Caco-2 (cell line): ENCODE measurements at regions of chr13 and their contacts with region 1.

Region 1: GRCh38 chr13:49936085-49936940 is at the start of gene SPRYD7:
- DNase-seq: peak; percentile 99 to 100
- H3K4me3 ChIP-seq: peak within 1 kb of the TSS; percentile 97
- H3K4me3 Mint-ChIP-seq: peak within 1 kb of the TSS; percentile 100
- H3K27ac Mint-ChIP-seq: peak within 1 kb of the TSS; percentile 98
- H3K4me1 ChIP-seq: peaks cover 43% of the 10 kb centered on the region
- H3K4me1 Mint-ChIP-seq: peaks cover 32% of the 10 kb centered on the region
- H3K27me3 ChIP-seq: no peaks in the 10 kb centered on the region
- H3K27me3 Mint-ChIP-seq: no peaks in the 10 kb centered on the region
- CTCF ChIP-seq: peak; percentile 97 to 99
- total RNA-seq, gene SPRYD7: 16.7 and 20.7 TPM in 2 replicates

Region 2: GRCh38 chr13:49086711-49087110 is 849.6 kb before region 1 on chr13:
- CTCF ChIA-PET with region 1: no interaction called
- POLR2A ChIA-PET with region 1: no interaction called
- intact Hi-C with region 1: no loop called
- DNase-seq: no peak
- H3K4me3 ChIP-seq: no peak overlapping the region
- H3K4me3 Mint-ChIP-seq: no peak overlapping the region
- H3K27ac Mint-ChIP-seq: no peak overlapping the region
- H3K4me1 ChIP-seq: no peaks in the 10 kb centered on the region
- H3K4me1 Mint-ChIP-seq: no peaks in the 10 kb centered on the region
- H3K27me3 ChIP-seq: no peaks in the 10 kb centered on the region
- H3K27me3 Mint-ChIP-seq: no peaks in the 10 kb centered on the region
- CTCF ChIP-seq: no peak

Region 3: DNA sequence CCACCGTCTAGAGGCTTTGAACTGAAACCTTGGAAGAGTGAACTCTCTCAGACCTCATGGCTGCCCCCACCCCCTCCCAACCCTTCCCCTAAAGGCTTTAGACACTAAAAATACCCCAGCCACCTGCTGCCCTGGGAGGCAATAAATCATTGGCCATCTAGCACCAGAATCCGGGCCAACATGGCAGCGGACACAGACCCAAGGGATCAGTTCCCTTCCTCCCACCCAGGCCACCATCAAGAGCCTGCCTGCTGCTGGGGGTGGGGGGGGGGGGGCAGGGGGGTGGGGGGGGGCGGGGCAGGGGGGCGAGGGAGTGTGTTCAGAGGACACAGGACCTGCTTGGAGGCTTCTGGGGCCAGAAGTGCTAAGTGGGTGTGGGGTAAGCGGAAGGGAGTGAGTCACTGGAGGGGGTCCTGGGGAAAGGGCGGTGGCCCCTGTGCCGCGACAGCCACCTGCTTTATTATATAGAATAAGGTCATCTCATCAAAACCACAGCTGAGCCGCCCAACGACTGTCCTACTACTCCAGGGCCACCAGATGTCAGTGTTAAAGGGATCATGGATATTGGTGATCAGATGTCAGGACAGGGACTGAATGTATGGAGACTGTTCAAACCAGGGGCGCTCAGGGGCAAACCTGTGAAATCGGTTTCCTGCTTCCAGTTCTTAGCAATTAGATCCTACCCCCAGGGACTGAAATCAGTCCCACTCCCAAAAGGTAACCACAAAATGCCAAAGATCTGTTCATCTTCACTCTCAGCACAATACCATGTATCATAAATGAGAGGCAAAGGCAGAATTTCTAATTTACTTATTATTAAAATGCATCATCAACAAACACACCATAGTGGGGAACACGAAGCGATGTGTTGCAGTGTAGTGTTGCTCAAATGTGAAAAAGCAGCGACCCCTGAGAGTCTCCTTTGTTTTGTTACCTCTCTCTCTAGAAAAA is 283.7 kb before region 1 on chr13:
- CTCF ChIA-PET with region 1: interaction called, 6 read pairs
- POLR2A ChIA-PET with region 1: no interaction called
- intact Hi-C with region 1: loop called (anchors 2 kb)
- DNase-seq: peak; percentile 65 to 72
- H3K4me3 ChIP-seq: no peak overlapping the region
- H3K4me3 Mint-ChIP-seq: no peak overlapping the region
- H3K27ac Mint-ChIP-seq: no peak overlapping the region
- H3K4me1 ChIP-seq: no peaks in the 10 kb centered on the region
- H3K4me1 Mint-ChIP-seq: no peaks in the 10 kb centered on the region
- H3K27me3 ChIP-seq: no peaks in the 10 kb centered on the region
- H3K27me3 Mint-ChIP-seq: no peaks in the 10 kb centered on the region
- CTCF ChIP-seq: peak; percentile 75 to 80

Region 4: DNA sequence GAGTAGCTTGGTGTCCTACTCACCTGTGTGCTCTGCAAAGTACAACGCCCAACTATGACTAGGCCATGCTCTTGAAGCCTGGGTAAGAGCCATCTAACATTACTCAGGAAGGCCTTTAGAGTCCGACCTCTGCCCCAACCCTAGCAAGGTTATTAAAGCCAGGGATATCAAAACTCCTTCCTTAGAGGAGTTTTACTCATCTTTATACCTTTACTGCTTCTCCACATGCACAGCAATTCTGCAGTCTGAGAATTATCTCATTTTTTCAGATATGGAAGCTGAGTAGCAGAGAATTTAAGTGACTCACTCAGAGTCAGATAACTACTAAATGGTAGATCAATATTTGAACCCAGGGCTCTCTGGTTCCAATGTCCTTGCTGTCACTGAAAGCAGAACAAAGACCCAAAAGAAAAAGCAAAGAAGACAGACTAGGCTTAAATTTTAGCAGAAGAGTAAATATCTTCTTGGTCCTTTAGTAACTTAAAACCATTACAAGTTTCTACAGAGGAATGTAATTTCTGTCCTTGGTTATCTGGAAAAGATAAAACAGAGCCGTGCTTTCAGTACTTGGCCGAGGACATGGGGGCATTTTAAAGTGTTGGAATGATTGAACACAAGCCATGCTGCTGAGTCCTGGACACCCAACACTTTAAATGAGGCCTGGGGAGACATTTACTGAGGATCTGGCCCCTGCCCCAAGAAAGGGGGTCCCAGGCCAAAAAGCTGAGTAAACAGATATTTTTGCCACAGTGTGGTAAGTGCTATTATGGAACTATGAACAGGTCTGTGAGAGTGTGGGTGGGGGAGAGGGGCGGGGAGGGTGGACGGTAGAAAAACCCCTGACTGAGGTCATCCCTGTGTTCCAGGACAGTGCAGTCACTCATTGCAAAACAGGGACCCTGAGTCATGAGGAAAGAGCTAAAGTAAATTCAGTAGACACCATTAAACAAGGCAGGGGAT is 125.5 kb before region 1 on chr13:
- CTCF ChIA-PET with region 1: interaction called, 12 read pairs
- POLR2A ChIA-PET with region 1: interaction called, 3 read pairs
- intact Hi-C with region 1: no loop called
- DNase-seq: peak; percentile 76 to 89
- H3K4me3 ChIP-seq: no peak overlapping the region; the same call in 1 of the 2 replicates
- H3K4me3 Mint-ChIP-seq: peak overlapping the region; percentile 63
- H3K27ac Mint-ChIP-seq: peak overlapping the region; percentile 91
- H3K4me1 ChIP-seq: peaks cover 90% of the 10 kb centered on the region
- H3K4me1 Mint-ChIP-seq: peaks cover 49% of the 10 kb centered on the region
- H3K27me3 ChIP-seq: no peaks in the 10 kb centered on the region
- H3K27me3 Mint-ChIP-seq: no peaks in the 10 kb centered on the region
- CTCF ChIP-seq: no peak

Region 5: GRCh38 chr13:49908637-49909036 is 27.7 kb before region 1 on chr13:
- CTCF ChIA-PET with region 1: interaction called, 19 read pairs
- POLR2A ChIA-PET with region 1: no interaction called
- intact Hi-C with region 1: no loop called
- DNase-seq: peak in 1 of 2 experiments; percentile 15
- H3K4me3 ChIP-seq: no peak overlapping the region
- H3K4me3 Mint-ChIP-seq: no peak overlapping the region
- H3K27ac Mint-ChIP-seq: no peak overlapping the region
- H3K4me1 ChIP-seq: no peaks in the 10 kb centered on the region
- H3K4me1 Mint-ChIP-seq: no peaks in the 10 kb centered on the region
- H3K27me3 ChIP-seq: no peaks in the 10 kb centered on the region
- H3K27me3 Mint-ChIP-seq: no peaks in the 10 kb centered on the region
- CTCF ChIP-seq: no peak

Region 6: GRCh38 chr13:49996951-49997895 is 60.9 kb after region 1 on chr13 and contains the start of gene TRIM13:
- CTCF ChIA-PET with region 1: interaction called, 40 read pairs
- POLR2A ChIA-PET with region 1: interaction called, 19 read pairs
- intact Hi-C with region 1: loop called (anchors 1 kb)
- DNase-seq: peak; percentile 91
- H3K4me3 ChIP-seq: peak within 1 kb of the TSS; percentile 77
- H3K4me3 Mint-ChIP-seq: peak within 1 kb of the TSS; percentile 92
- H3K27ac Mint-ChIP-seq: peak within 1 kb of the TSS; percentile 91
- H3K4me1 ChIP-seq: peaks cover 29% of the 10 kb centered on the region
- H3K4me1 Mint-ChIP-seq: peaks cover 9% of the 10 kb centered on the region
- H3K27me3 ChIP-seq: no peaks in the 10 kb centered on the region
- H3K27me3 Mint-ChIP-seq: no peaks in the 10 kb centered on the region
- CTCF ChIP-seq: peak; percentile 79 to 93
- total RNA-seq, gene TRIM13: 16.5 and 21.0 TPM in 2 replicates